B cell (primary cell): ENCODE measurements at regions of chr15 and their contacts with region 1.

Region 1: GRCh38 chr15:72312605-72313447 is 7.1 kb downstream of the CELF6 start:
- DNase-seq: peak; percentile 72
- ATAC-seq: peak; percentile 87
- H3K4me3 ChIP-seq: no peak overlapping the region
- H3K4me3 Mint-ChIP-seq: no peak overlapping the region
- H3K27ac ChIP-seq: no peak overlapping the region
- H3K27ac Mint-ChIP-seq: no peak overlapping the region
- H3K4me1 ChIP-seq: no peaks in the 10 kb centered on the region
- H3K4me1 Mint-ChIP-seq: no peaks in the 10 kb centered on the region
- H3K27me3 ChIP-seq: no peaks in the 10 kb centered on the region
- H3K27me3 Mint-ChIP-seq: no peaks in the 10 kb centered on the region
- CTCF ChIP-seq: peak; percentile 79

Region 2: DNA sequence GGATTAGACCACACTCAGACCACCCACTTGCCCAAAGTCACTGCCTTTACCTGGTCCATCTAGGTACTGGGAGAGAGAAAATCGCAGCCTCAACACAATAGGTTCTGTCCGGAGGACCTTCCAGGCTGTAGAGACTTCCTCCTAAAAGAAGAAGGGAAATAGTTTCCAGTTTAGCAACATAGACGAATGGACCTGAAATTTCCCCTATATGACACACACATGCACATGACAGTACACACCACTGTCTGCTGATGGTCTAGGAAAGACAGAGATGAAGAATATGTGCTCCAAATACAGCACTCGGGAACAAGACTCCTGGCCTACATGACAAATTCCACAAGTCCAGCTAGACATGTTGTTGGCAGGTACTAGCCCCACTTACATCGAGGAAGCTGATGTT is 47.8 kb before region 1 on chr15:
- CTCF ChIA-PET with region 1: no interaction called
- POLR2A ChIA-PET with region 1: no interaction called
- intact Hi-C with region 1: no loop called
- DNase-seq: no peak
- ATAC-seq: no peak
- H3K4me3 ChIP-seq: no peak overlapping the region
- H3K4me3 Mint-ChIP-seq: no peak overlapping the region
- H3K27ac ChIP-seq: no peak overlapping the region
- H3K27ac Mint-ChIP-seq: no peak overlapping the region
- H3K4me1 ChIP-seq: no peaks in the 10 kb centered on the region
- H3K4me1 Mint-ChIP-seq: peaks cover 5% of the 10 kb centered on the region
- H3K27me3 ChIP-seq: no peaks in the 10 kb centered on the region
- H3K27me3 Mint-ChIP-seq: no peaks in the 10 kb centered on the region
- CTCF ChIP-seq: no peak

Region 3: GRCh38 chr15:72331021-72331420 is 18.2 kb after region 1 on chr15:
- CTCF ChIA-PET with region 1: interaction called, 11 read pairs
- POLR2A ChIA-PET with region 1: no interaction called
- intact Hi-C with region 1: no loop called
- DNase-seq: no peak
- ATAC-seq: no peak
- H3K4me3 ChIP-seq: no peak overlapping the region
- H3K4me3 Mint-ChIP-seq: no peak overlapping the region
- H3K27ac ChIP-seq: no peak overlapping the region
- H3K27ac Mint-ChIP-seq: no peak overlapping the region
- H3K4me1 ChIP-seq: no peaks in the 10 kb centered on the region
- H3K4me1 Mint-ChIP-seq: no peaks in the 10 kb centered on the region
- H3K27me3 ChIP-seq: no peaks in the 10 kb centered on the region
- H3K27me3 Mint-ChIP-seq: no peaks in the 10 kb centered on the region
- CTCF ChIP-seq: no peak

Region 4: DNA sequence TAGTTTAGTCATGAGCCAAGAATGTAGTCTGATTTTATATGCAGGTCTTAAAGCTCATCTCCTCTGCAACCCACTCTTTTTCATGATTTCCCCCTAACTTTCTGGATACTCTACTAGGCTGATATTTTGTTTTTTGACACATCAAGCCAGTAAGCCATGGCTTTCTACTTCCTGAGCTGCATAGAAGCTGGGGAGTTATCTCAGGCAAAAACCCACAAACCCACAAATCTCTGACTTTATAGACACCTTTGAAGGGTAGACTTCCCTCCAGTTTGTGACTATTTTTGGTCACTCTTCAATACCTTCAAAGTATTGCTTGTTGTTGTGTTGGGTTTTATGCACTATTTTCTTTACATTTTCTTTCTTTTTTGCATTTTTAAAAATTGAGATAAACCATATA is 113.9 kb after region 1 on chr15:
- CTCF ChIA-PET with region 1: no interaction called
- POLR2A ChIA-PET with region 1: no interaction called
- intact Hi-C with region 1: no loop called
- DNase-seq: no peak
- ATAC-seq: no peak
- H3K4me3 ChIP-seq: no peak overlapping the region
- H3K4me3 Mint-ChIP-seq: no peak overlapping the region
- H3K27ac ChIP-seq: no peak overlapping the region
- H3K27ac Mint-ChIP-seq: no peak overlapping the region
- H3K4me1 ChIP-seq: no peaks in the 10 kb centered on the region
- H3K4me1 Mint-ChIP-seq: no peaks in the 10 kb centered on the region
- H3K27me3 ChIP-seq: no peaks in the 10 kb centered on the region
- H3K27me3 Mint-ChIP-seq: no peaks in the 10 kb centered on the region
- CTCF ChIP-seq: no peak